Activated CD8-positive, alpha-beta T cell treated with anti-CD3 and anti-CD28 coated beads for 36 hours (primary cell): ENCODE measurements at regions of chr3 and their contacts with region 1.

Region 1: DNA sequence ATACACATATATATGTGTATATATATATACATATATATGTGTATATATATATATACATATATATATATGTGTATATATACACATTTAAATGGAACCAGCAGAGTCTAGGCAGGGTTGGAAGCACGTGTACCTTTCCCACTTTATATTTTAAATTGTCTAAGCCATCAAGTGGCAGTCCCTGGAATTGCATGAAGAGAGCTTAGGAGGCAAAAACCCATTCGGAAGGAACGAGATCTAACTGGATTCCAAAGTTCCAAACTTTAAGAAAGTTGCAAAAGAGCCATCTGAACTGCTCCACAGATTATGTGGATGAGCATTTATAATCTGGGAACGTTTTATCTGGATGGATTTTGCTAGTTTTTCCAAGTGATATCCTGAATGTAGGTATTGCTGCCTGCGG is 186.5 kb downstream of the FOXP1 start:
- DNase-seq: peak; percentile 49
- ATAC-seq: no peak
- H3K4me3 Mint-ChIP-seq: peak overlapping the region; percentile 73
- H3K27ac Mint-ChIP-seq: peak overlapping the region; percentile 91
- H3K4me1 Mint-ChIP-seq: peaks cover 80% of the 10 kb centered on the region
- H3K27me3 Mint-ChIP-seq: no peaks in the 10 kb centered on the region
- CTCF ChIP-seq: peak; percentile 43

Region 2: DNA sequence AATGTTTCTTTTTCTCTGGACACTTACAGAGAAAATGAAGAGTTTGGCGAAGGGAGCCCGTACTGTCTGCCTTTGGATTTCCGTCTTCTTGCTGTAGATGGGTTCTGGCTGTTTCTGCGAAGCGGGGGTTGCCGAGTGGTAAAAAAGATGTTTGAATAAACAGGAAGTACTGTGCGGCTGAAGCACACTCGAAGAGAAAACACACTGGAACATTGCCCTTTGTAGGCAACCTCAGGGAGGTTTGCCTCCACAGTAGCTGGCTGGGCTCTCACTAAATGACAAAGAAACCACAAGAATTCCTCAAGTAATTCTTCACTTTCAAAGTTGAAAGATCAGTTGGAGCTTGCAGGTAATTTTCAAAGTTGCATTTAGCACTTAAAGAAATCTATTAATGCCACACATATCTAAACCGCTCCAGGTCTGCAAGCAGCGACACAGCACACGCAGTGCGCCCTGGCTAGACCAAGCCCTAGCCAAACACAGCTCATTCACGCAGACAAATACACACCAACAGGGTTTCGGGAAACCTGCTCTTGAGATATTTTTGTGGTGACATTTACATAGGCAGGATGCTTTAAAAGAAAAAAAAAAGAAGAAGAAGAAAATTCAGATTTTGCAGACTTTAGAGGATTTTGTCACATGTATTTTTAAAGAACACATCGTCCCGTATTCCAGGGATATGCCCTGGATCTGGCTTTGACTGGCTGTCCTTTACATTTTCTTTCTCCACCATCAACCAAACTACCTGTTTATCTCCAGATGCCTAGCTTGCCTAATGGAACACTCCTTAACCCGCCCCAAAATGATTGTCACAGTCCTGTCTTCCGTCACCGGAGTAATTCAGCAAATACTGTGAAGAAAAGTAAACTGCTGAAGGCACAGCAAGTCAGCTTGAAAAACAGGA is 266.3 kb before region 1 on chr3:
- CTCF ChIA-PET with region 1: no interaction called
- POLR2A ChIA-PET with region 1: no interaction called
- intact Hi-C with region 1: loop called (anchors 10 kb)
- DNase-seq: peak; percentile 87
- ATAC-seq: peak; percentile 62
- H3K4me3 Mint-ChIP-seq: peak overlapping the region; percentile 77
- H3K27ac Mint-ChIP-seq: peak overlapping the region; percentile 93
- H3K4me1 Mint-ChIP-seq: peaks cover 68% of the 10 kb centered on the region
- H3K27me3 Mint-ChIP-seq: no peaks in the 10 kb centered on the region
- CTCF ChIP-seq: no peak

Region 3: GRCh38 chr3:71416876-71417275 is 19.8 kb after region 1 on chr3:
- CTCF ChIA-PET with region 1: interaction called, 17 read pairs
- POLR2A ChIA-PET with region 1: interaction called, 11 read pairs
- intact Hi-C with region 1: no loop called
- DNase-seq: peak; percentile 84
- ATAC-seq: peak; percentile 55
- H3K4me3 Mint-ChIP-seq: peak overlapping the region; percentile 60
- H3K27ac Mint-ChIP-seq: peak overlapping the region; percentile 82
- H3K4me1 Mint-ChIP-seq: peaks cover 96% of the 10 kb centered on the region
- H3K27me3 Mint-ChIP-seq: no peaks in the 10 kb centered on the region
- CTCF ChIP-seq: peak; percentile 40

Region 4: GRCh38 chr3:71444028-71444860 is 47.2 kb after region 1 on chr3:
- CTCF ChIA-PET with region 1: interaction called, 4 read pairs
- POLR2A ChIA-PET with region 1: interaction called, 6 read pairs
- intact Hi-C with region 1: loop called (anchors 1 kb)
- DNase-seq: peak; percentile 82
- ATAC-seq: peak; percentile 63
- H3K4me3 Mint-ChIP-seq: peak overlapping the region; percentile 73
- H3K27ac Mint-ChIP-seq: peak overlapping the region; percentile 100
- H3K4me1 Mint-ChIP-seq: peaks cover 89% of the 10 kb centered on the region
- H3K27me3 Mint-ChIP-seq: no peaks in the 10 kb centered on the region
- CTCF ChIP-seq: no peak

Region 5: GRCh38 chr3:71466483-71466882 is 69.4 kb after region 1 on chr3:
- CTCF ChIA-PET with region 1: no interaction called
- POLR2A ChIA-PET with region 1: no interaction called
- intact Hi-C with region 1: no loop called
- DNase-seq: no peak
- ATAC-seq: no peak
- H3K4me3 Mint-ChIP-seq: no peak overlapping the region
- H3K27ac Mint-ChIP-seq: no peak overlapping the region
- H3K4me1 Mint-ChIP-seq: peaks cover 72% of the 10 kb centered on the region
- H3K27me3 Mint-ChIP-seq: no peaks in the 10 kb centered on the region
- CTCF ChIP-seq: no peak

Region 6: DNA sequence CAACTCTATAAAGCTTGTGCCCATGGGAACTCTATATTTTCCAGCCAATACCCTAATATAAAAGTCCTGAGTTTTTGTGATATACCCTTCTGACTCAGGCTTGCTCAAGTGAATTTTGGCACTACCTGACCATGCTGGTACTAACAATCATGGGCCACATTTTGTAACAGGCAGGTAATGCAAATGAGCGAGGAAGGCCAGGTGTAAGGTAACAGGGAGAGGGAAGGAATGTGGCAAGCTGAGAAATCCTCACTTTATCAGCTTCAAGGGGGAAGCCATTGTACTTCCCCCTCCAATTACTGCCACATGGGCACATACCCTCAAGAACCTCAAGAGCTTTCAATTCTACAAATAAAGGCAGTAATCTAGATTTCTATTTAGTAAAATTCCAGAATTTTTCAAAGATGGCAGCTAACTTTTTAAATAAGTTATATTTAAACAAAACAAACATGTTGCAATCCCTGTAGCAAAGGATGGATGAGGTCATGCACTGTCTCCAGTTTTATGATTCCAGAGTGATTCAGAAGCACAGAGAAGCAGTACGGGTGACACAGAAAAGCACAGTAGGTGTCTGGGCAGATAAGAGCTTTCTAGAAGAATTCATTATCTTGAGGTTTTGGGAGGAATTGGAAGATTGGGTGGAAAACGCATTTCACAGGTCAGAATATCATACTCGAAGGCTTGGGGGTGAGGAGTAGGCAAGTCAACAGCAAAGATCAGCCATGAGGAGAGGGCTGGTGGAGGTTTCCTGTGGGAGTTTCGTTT is 98.8 kb after region 1 on chr3:
- CTCF ChIA-PET with region 1: interaction called, 5 read pairs
- POLR2A ChIA-PET with region 1: interaction called, 3 read pairs
- intact Hi-C with region 1: loop called (anchors 5 kb)
- DNase-seq: peak; percentile 59
- ATAC-seq: peak; percentile 63
- H3K4me3 Mint-ChIP-seq: peak overlapping the region; percentile 64
- H3K27ac Mint-ChIP-seq: peak overlapping the region; percentile 95
- H3K4me1 Mint-ChIP-seq: peaks cover 82% of the 10 kb centered on the region
- H3K27me3 Mint-ChIP-seq: no peaks in the 10 kb centered on the region
- CTCF ChIP-seq: no peak